Panc1 (cell line): ENCODE measurements at regions of chr12 and their contacts with region 1.

Region 1: GRCh38 chr12:103548622-103549601 is 38.2 kb upstream of the STAB2 start:
- DNase-seq: peak; percentile 62
- ATAC-seq: peak; percentile 96
- H3K4me3 ChIP-seq: no peak overlapping the region
- H3K27ac ChIP-seq: no peak overlapping the region
- H3K4me1 ChIP-seq: no peaks in the 10 kb centered on the region
- H3K27me3 ChIP-seq: peaks cover 4% of the 10 kb centered on the region
- CTCF ChIP-seq: peak; percentile 85

Region 2: GRCh38 chr12:102883204-102883799 is 665.6 kb before region 1 on chr12:
- CTCF ChIA-PET with region 1: interaction called, 6 read pairs
- POLR2A ChIA-PET with region 1: no interaction called
- in situ Hi-C with region 1: no loop called
- intact Hi-C with region 1: loop called (anchors 1 kb)
- DNase-seq: peak; percentile 25
- ATAC-seq: peak; percentile 95
- H3K4me3 ChIP-seq: no peak overlapping the region
- H3K27ac ChIP-seq: no peak overlapping the region
- H3K4me1 ChIP-seq: no peaks in the 10 kb centered on the region
- H3K27me3 ChIP-seq: no peaks in the 10 kb centered on the region; the same call in 1 of the 2 replicates
- CTCF ChIP-seq: peak; percentile 90

Region 3: GRCh38 chr12:102950107-102950949 is 598.6 kb before region 1 on chr12:
- CTCF ChIA-PET with region 1: interaction called, 5 read pairs
- POLR2A ChIA-PET with region 1: no interaction called
- in situ Hi-C with region 1: no loop called
- intact Hi-C with region 1: loop called (anchors 1 kb)
- DNase-seq: no peak
- ATAC-seq: peak; percentile 79
- H3K4me3 ChIP-seq: peak overlapping the region in 1 of 2 experiments; percentile 34; a peak in 2 of 4 replicates
- H3K27ac ChIP-seq: no peak overlapping the region
- H3K4me1 ChIP-seq: no peaks in the 10 kb centered on the region; the same call in 1 of the 2 replicates
- H3K27me3 ChIP-seq: peaks cover 5% of the 10 kb centered on the region; the same call in 1 of the 2 replicates
- CTCF ChIP-seq: peak; percentile 42

Region 4: GRCh38 chr12:103114296-103115055 is 434.4 kb before region 1 on chr12:
- CTCF ChIA-PET with region 1: no interaction called
- POLR2A ChIA-PET with region 1: no interaction called
- in situ Hi-C with region 1: no loop called
- intact Hi-C with region 1: no loop called
- DNase-seq: no peak
- ATAC-seq: no peak
- H3K4me3 ChIP-seq: no peak overlapping the region
- H3K27ac ChIP-seq: no peak overlapping the region
- H3K4me1 ChIP-seq: no peaks in the 10 kb centered on the region
- H3K27me3 ChIP-seq: no peaks in the 10 kb centered on the region
- CTCF ChIP-seq: no peak

Region 5: GRCh38 chr12:103495479-103496456 is 53.1 kb before region 1 on chr12 and contains the start of gene C12orf42:
- CTCF ChIA-PET with region 1: interaction called, 4 read pairs
- POLR2A ChIA-PET with region 1: no interaction called
- in situ Hi-C with region 1: no loop called
- intact Hi-C with region 1: loop called (anchors 2 kb)
- DNase-seq: peak; percentile 5
- ATAC-seq: peak; percentile 74
- H3K4me3 ChIP-seq: no peak within 1 kb of the TSS; a peak in 1 of 4 replicates
- H3K27ac ChIP-seq: no peak within 1 kb of the TSS
- H3K4me1 ChIP-seq: no peaks in the 10 kb centered on the region
- H3K27me3 ChIP-seq: peaks cover 4% of the 10 kb centered on the region; the same call in 1 of the 2 replicates
- CTCF ChIP-seq: peak; percentile 58
- total RNA-seq, gene C12orf42: not detected

Region 6: GRCh38 chr12:103560604-103561573 is 12.0 kb after region 1 on chr12:
- CTCF ChIA-PET with region 1: no interaction called
- POLR2A ChIA-PET with region 1: no interaction called
- in situ Hi-C with region 1: no loop called
- intact Hi-C with region 1: no loop called
- DNase-seq: peak; percentile 73
- ATAC-seq: peak; percentile 94
- H3K4me3 ChIP-seq: no peak overlapping the region
- H3K27ac ChIP-seq: no peak overlapping the region
- H3K4me1 ChIP-seq: peaks cover 4% of the 10 kb centered on the region; the same call in 1 of the 2 replicates
- H3K27me3 ChIP-seq: no peaks in the 10 kb centered on the region
- CTCF ChIP-seq: no peak

Region 7: GRCh38 chr12:103705927-103706326 is 157.0 kb after region 1 on chr12:
- CTCF ChIA-PET with region 1: no interaction called
- POLR2A ChIA-PET with region 1: no interaction called
- in situ Hi-C with region 1: no loop called
- intact Hi-C with region 1: no loop called
- DNase-seq: no peak
- ATAC-seq: peak; percentile 71; the same call in 1 of the 2 replicates
- H3K4me3 ChIP-seq: no peak overlapping the region
- H3K27ac ChIP-seq: no peak overlapping the region
- H3K4me1 ChIP-seq: no peaks in the 10 kb centered on the region
- H3K27me3 ChIP-seq: peaks cover 24% of the 10 kb centered on the region
- CTCF ChIP-seq: peak; percentile 54